ENCODE measurements at regions of chr6 and their contacts with region 1.

Region 1: DNA sequence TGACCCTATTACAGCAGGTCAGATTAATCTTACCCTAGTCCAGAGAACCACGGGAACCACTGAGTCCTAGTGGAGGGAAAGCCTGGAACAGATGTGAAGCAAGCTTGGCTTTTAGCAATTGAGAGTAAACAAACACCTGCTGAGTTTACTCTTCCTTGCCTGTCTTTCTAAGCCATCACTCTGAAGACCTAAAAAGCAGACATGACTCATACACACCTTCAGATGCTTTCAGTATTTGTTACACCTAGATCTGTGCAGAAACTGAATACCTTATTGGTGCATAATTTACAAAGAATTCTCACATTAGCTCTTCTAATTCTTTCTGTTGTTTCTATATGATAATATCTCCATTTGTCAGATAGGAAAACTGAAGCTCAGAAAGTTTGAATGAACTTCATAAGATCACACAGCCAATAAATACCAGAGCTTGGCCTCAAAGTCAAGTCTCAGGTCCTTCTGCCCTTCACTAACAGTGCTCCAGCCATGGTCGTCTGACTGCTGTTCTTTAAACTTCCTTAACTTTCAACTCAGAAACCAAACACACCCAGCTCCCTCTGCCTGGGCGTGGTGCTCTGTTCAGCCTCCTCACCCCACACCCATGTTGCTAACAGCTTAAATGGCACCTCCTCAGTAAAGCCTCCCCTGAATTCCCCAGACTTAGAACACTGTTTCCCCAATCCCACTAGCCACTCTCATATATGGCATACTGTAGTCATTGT is 8.6 kb upstream of the GABBR1 start:
- DNase-seq: no peak
- H3K4me3 ChIP-seq: no peak overlapping the region
- H3K27ac ChIP-seq: no peak overlapping the region
- H3K4me1 ChIP-seq: no peaks in the 10 kb centered on the region
- H3K27me3 ChIP-seq: no peaks in the 10 kb centered on the region
- CTCF ChIP-seq: no peak
- POLR2A ChIP-seq: no peak

Region 2: GRCh38 chr6:28340310-28341095 is 1301.1 kb before region 1 on chr6:
- intact Hi-C with region 1: loop called (anchors 5 kb)
- DNase-seq: no peak
- H3K4me3 ChIP-seq: no peak overlapping the region
- H3K27ac ChIP-seq: no peak overlapping the region
- H3K4me1 ChIP-seq: peaks cover 12% of the 10 kb centered on the region
- H3K27me3 ChIP-seq: no peaks in the 10 kb centered on the region
- CTCF ChIP-seq: no peak
- POLR2A ChIP-seq: no peak

Measured in vagina (tissue), 2 donors.